Sigmoid colon (tissue), 7 donors: ENCODE measurements at regions of chr6 and their contacts with region 1.

Region 1: GRCh38 chr6:75424618-75425548 is 68.7 kb downstream of the FILIP1 start:
- DNase-seq: no peak
- H3K4me3 ChIP-seq: no peak overlapping the region
- H3K27ac ChIP-seq: peak overlapping the region in 3 of 4 donors; percentile 15 to 55 (median 47)
- H3K4me1 ChIP-seq: peaks cover 0 to 57% (median 40%) of the 10 kb centered on the region in 4 donors
- H3K27me3 ChIP-seq: no peaks in the 10 kb centered on the region
- CTCF ChIP-seq: no peak
- EP300 ChIP-seq: no peak
- POLR2A ChIP-seq: no peak

Region 2: GRCh38 chr6:75488033-75488432 is 63.1 kb after region 1 on chr6:
- intact Hi-C with region 1: loop called (anchors 5 kb)
- DNase-seq: no peak
- H3K4me3 ChIP-seq: peak overlapping the region in 3 of 4 donors; percentile 47 to 63 (median 57)
- H3K27ac ChIP-seq: peak overlapping the region; percentile 82 to 93 (median 86)
- H3K4me1 ChIP-seq: peaks cover 0 to 68% (median 42%) of the 10 kb centered on the region in 4 donors
- H3K27me3 ChIP-seq: no peaks in the 10 kb centered on the region
- CTCF ChIP-seq: no peak
- EP300 ChIP-seq: no peak
- POLR2A ChIP-seq: no peak